Breast epithelium (tissue), 4 donors: ENCODE measurements at regions of chr5 and their contacts with region 1.

Region 1: DNA sequence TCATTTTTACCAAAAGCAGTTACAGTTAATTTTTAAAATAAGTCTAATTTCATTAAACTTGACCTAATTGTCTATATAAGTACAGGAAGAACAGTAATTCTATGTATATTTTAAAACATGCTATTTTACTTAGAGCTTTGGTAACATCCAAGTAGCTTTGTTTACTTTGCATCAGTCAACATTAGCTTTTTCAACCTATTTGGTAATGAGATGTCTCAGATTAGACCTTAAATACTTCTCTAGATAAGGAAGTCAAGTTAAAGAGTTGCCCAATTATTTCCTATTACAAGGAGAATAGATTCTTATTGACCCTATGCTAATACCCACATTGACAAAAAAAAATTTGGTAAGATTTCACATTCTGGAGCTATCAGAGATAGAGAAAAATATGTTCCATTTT is 1193.0 kb downstream of the EFNA5 start:
- DNase-seq: no peak
- H3K4me3 ChIP-seq: no peak overlapping the region
- H3K27ac ChIP-seq: no peak overlapping the region
- H3K4me1 ChIP-seq: no peaks in the 10 kb centered on the region
- H3K27me3 ChIP-seq: no peaks in the 10 kb centered on the region
- CTCF ChIP-seq: no peak
- POLR2A ChIP-seq: no peak

Region 2: DNA sequence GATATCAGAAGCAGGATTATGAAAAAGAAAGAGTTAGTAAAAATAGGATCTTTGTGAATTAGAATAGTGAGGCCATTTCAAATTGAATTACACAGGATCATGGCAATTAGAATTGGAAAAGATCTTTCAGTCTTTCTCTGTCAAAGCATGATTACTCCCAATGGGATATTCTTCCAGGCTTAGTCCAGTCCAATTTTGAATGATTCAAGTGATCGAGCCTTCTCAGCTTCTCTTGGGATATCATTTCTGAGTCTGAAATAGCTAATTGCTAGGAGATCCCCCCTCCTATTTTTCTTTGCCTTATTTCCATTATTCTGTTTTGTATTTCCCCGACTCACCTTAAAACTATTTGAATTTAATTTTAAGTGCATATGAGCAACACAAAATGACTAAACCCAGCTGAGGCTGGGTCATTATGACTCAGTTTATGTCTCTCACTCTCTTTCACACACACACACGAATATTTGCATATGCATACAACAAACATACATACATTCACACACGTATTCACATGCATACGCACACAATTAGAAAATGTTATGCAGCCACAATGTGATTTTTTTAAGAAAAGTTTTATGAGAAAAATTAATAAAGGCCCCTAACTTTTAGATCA is 1227.8 kb after region 1 on chr5:
- intact Hi-C with region 1: loop called (anchors 5 kb)
- DNase-seq: no peak
- H3K4me3 ChIP-seq: peak overlapping the region in 2 of 3 donors; percentile 9 to 11
- H3K27ac ChIP-seq: no peak overlapping the region
- H3K4me1 ChIP-seq: no peaks in the 10 kb centered on the region
- H3K27me3 ChIP-seq: no peaks in the 10 kb centered on the region
- CTCF ChIP-seq: no peak
- POLR2A ChIP-seq: no peak